ENCODE measurements at regions of chr7 and their contacts with region 1.

Region 1: GRCh38 chr7:104156842-104157277 is 51.0 kb downstream of the ORC5 start:
- DNase-seq: peak; percentile 12
- H3K4me3 ChIP-seq: no peak overlapping the region
- CTCF ChIP-seq: peak; percentile 56

Region 2: GRCh38 chr7:103573479-103574058 is 583.3 kb before region 1 on chr7:
- in situ Hi-C with region 1: loop called (anchors 25 kb)
- DNase-seq: peak; percentile 24
- H3K4me3 ChIP-seq: no peak overlapping the region
- CTCF ChIP-seq: peak; percentile 9

Region 3: GRCh38 chr7:104480529-104480928 is 323.7 kb after region 1 on chr7:
- in situ Hi-C with region 1: no loop called
- DNase-seq: no peak
- H3K4me3 ChIP-seq: no peak overlapping the region
- CTCF ChIP-seq: no peak

Region 4: GRCh38 chr7:105003275-105003674 is 846.4 kb after region 1 on chr7:
- in situ Hi-C with region 1: no loop called
- DNase-seq: no peak
- H3K4me3 ChIP-seq: peak overlapping the region; percentile 17
- CTCF ChIP-seq: no peak

Measured in astrocyte of the cerebellum (primary cell).